AG04450 (cell line): ENCODE measurements at regions of chr14 and their contacts with region 1.

Region 1: GRCh38 chr14:64986578-64987571 is at the start of gene FNTB:
- DNase-seq: peak; percentile 92
- H3K4me3 ChIP-seq: peak within 1 kb of the TSS; percentile 99
- H3K27ac ChIP-seq: peak within 1 kb of the TSS; percentile 80
- H3K27me3 ChIP-seq: peaks cover 9% of the 10 kb centered on the region
- CTCF ChIP-seq: peak; percentile 83
- polyA plus RNA-seq, gene FNTB: 17.3 and 20.2 TPM in 2 replicates

Region 2: GRCh38 chr14:64778104-64778754 is 208.6 kb before region 1 on chr14:
- CTCF ChIA-PET with region 1: no interaction called
- POLR2A ChIA-PET with region 1: no interaction called
- DNase-seq: no peak
- H3K4me3 ChIP-seq: no peak overlapping the region
- H3K27ac ChIP-seq: no peak overlapping the region
- H3K27me3 ChIP-seq: peaks cover 24% of the 10 kb centered on the region
- CTCF ChIP-seq: no peak

Region 3: DNA sequence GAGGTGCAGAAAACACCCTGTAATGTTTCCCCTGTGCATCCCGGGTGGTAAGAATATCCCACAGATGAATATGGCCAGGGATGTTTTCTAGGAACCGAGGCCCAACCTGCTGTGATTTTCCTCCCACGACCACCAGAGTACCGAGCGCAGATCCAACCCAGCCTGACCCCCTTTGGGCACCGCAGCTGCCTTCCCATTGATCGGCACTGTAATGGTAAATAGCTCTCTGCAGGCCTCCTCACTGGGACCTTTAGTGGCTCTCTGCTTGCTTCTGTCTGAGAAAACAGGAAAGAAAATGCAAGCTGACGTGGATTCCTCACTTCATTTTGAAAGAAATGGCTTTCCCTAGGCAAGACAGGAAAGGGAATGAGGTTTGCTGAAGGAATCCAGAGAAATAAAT is 12.3 kb before region 1 on chr14:
- CTCF ChIA-PET with region 1: interaction called, 11 read pairs
- POLR2A ChIA-PET with region 1: no interaction called
- DNase-seq: no peak
- H3K4me3 ChIP-seq: no peak overlapping the region
- H3K27ac ChIP-seq: no peak overlapping the region
- H3K27me3 ChIP-seq: peaks cover 10% of the 10 kb centered on the region
- CTCF ChIP-seq: no peak

Region 4: GRCh38 chr14:64997108-64997794 is 10.4 kb after region 1 on chr14:
- CTCF ChIA-PET with region 1: interaction called, 16 read pairs
- POLR2A ChIA-PET with region 1: interaction called, 4 read pairs
- DNase-seq: no peak
- H3K4me3 ChIP-seq: no peak overlapping the region
- H3K27ac ChIP-seq: no peak overlapping the region
- H3K27me3 ChIP-seq: no peaks in the 10 kb centered on the region
- CTCF ChIP-seq: no peak

Region 5: GRCh38 chr14:65277027-65277426 is 290.2 kb after region 1 on chr14:
- CTCF ChIA-PET with region 1: no interaction called
- POLR2A ChIA-PET with region 1: no interaction called
- DNase-seq: no peak
- H3K4me3 ChIP-seq: no peak overlapping the region
- H3K27ac ChIP-seq: no peak overlapping the region
- H3K27me3 ChIP-seq: no peaks in the 10 kb centered on the region
- CTCF ChIP-seq: no peak